ENCODE measurements at regions of chr3 and their contacts with region 1.

Region 1: GRCh38 chr3:14266361-14266760 is 87.7 kb downstream of the LSM3 start:
- DNase-seq: no peak
- H3K4me3 ChIP-seq: no peak overlapping the region
- H3K4me3 Mint-ChIP-seq: no peak overlapping the region
- H3K27ac ChIP-seq: no peak overlapping the region
- H3K27ac Mint-ChIP-seq: no peak overlapping the region
- H3K4me1 ChIP-seq: no peaks in the 10 kb centered on the region
- H3K4me1 Mint-ChIP-seq: no peaks in the 10 kb centered on the region
- H3K27me3 ChIP-seq: no peaks in the 10 kb centered on the region
- H3K27me3 Mint-ChIP-seq: peaks cover 2 to 7% of the 10 kb centered on the region in 2 donors

Region 2: GRCh38 chr3:14467814-14468620 is 201.7 kb after region 1 on chr3:
- CTCF ChIA-PET with region 1: interaction called, 67 read pairs
- POLR2A ChIA-PET with region 1: no interaction called
- intact Hi-C with region 1: loop called (anchors 1 kb)
- DNase-seq: peak in 4 of 5 donors; percentile 26 to 42 (median 36)
- H3K4me3 ChIP-seq: no peak overlapping the region
- H3K4me3 Mint-ChIP-seq: no peak overlapping the region
- H3K27ac ChIP-seq: no peak overlapping the region
- H3K27ac Mint-ChIP-seq: peak overlapping the region in 4 of 7 donors; percentile 36 to 81 (median 54)
- H3K4me1 ChIP-seq: no peaks in the 10 kb centered on the region
- H3K4me1 Mint-ChIP-seq: peaks cover 0 to 2% (median 0%) of the 10 kb centered on the region in 4 donors
- H3K27me3 ChIP-seq: no peaks in the 10 kb centered on the region
- H3K27me3 Mint-ChIP-seq: no peaks in the 10 kb centered on the region

Measured in CD4-positive, alpha-beta memory T cell (primary cell).